Activated naive CD4-positive, alpha-beta T cell treated with anti-CD3 and anti-CD28 coated beads for 36 hours (primary cell): ENCODE measurements at regions of chr6 and their contacts with region 1.

Region 1: DNA sequence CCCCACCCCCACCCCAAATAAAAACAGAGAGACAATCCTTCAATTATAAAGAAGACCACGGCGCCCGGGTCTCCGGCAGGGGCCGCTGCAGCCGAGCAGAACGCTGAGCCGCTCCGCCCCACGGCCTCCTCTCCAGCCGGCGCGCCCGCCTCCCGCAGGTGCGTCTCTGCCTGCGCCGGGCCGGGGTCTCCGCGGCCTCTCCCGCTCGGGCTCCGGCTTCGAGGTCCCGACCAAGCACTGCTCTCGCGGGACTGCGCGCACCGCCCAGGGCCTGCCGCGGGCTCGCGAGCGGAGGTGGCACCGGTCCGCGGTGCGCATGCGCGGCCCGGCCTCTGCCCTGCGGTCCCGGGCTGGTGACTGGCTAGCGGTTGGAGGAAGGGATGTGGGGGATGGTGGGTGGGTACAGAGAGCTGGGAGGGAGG is 241 bp upstream of the SIRT5 start:
- DNase-seq: peak; percentile 91
- H3K4me3 Mint-ChIP-seq: peak overlapping the region; percentile 92
- H3K27ac Mint-ChIP-seq: peak overlapping the region; percentile 97
- H3K4me1 Mint-ChIP-seq: peaks cover 19% of the 10 kb centered on the region
- H3K27me3 Mint-ChIP-seq: no peaks in the 10 kb centered on the region

Region 2: GRCh38 chr6:13336553-13336952 is 237.6 kb before region 1 on chr6:
- CTCF ChIA-PET with region 1: interaction called, 32 read pairs
- intact Hi-C with region 1: loop called (anchors 1 kb)
- DNase-seq: peak; percentile 82
- H3K4me3 Mint-ChIP-seq: no peak overlapping the region
- H3K27ac Mint-ChIP-seq: no peak overlapping the region
- H3K4me1 Mint-ChIP-seq: peaks cover 8% of the 10 kb centered on the region
- H3K27me3 Mint-ChIP-seq: no peaks in the 10 kb centered on the region

Region 3: GRCh38 chr6:13427801-13428582 is 146.2 kb before region 1 on chr6:
- CTCF ChIA-PET with region 1: interaction called, 5 read pairs
- intact Hi-C with region 1: loop called (anchors 1 kb)
- DNase-seq: peak; percentile 90
- H3K4me3 Mint-ChIP-seq: peak overlapping the region; percentile 53
- H3K27ac Mint-ChIP-seq: peak overlapping the region; percentile 85
- H3K4me1 Mint-ChIP-seq: peaks cover 68% of the 10 kb centered on the region
- H3K27me3 Mint-ChIP-seq: no peaks in the 10 kb centered on the region

Region 4: GRCh38 chr6:13504611-13505344 is 69.4 kb before region 1 on chr6:
- CTCF ChIA-PET with region 1: no interaction called
- intact Hi-C with region 1: no loop called
- DNase-seq: no peak
- H3K4me3 Mint-ChIP-seq: no peak overlapping the region
- H3K27ac Mint-ChIP-seq: no peak overlapping the region
- H3K4me1 Mint-ChIP-seq: peaks cover 7% of the 10 kb centered on the region
- H3K27me3 Mint-ChIP-seq: no peaks in the 10 kb centered on the region

Region 5: DNA sequence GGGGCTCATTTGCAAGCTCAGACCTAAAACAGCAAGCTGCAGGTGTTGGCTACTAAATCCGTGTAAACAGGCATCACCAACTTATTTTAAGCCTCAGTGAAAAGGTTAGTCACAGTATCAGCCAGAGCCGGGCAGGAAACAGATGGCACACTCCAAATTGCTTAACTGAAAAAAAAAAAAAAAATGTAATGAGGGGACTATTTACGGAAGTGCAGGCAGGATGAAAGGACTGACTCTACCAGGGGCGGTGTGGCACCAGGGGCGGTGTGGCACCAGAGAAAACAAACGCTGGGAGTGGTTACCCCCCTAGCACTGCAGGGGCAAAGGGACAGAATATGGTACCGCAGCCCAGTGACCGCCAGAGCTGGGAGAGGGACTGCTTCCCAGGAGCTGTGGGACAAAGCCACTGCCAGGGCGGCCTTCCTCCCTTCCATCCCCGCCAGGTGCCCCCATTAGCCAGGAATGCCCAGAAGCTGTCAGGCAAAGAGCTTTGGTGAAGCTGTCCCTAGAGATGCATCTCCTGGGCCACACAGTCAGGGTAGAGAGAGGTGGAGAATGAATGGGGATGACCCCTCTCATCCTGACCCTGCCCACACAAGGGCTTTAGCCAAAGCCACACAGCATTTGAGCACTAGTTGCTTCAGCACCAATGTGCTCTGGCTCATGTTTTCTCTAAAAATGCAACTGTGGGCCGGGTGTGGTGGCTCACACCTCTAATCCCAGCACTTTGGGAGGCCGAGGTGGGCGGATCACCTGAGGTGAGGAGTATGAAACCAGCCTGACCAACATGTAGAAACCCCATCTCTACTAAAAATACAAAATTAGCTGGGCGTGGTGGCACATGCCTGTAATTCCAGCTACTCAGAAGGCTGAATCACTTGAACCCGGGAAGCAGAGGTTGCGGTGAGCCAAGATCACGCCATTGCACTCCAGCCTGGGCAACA is 47.2 kb before region 1 on chr6:
- CTCF ChIA-PET with region 1: interaction called, 3 read pairs
- intact Hi-C with region 1: loop called (anchors 1 kb)
- DNase-seq: peak; percentile 60
- H3K4me3 Mint-ChIP-seq: no peak overlapping the region
- H3K27ac Mint-ChIP-seq: no peak overlapping the region
- H3K4me1 Mint-ChIP-seq: peaks cover 11% of the 10 kb centered on the region
- H3K27me3 Mint-ChIP-seq: no peaks in the 10 kb centered on the region

Region 6: DNA sequence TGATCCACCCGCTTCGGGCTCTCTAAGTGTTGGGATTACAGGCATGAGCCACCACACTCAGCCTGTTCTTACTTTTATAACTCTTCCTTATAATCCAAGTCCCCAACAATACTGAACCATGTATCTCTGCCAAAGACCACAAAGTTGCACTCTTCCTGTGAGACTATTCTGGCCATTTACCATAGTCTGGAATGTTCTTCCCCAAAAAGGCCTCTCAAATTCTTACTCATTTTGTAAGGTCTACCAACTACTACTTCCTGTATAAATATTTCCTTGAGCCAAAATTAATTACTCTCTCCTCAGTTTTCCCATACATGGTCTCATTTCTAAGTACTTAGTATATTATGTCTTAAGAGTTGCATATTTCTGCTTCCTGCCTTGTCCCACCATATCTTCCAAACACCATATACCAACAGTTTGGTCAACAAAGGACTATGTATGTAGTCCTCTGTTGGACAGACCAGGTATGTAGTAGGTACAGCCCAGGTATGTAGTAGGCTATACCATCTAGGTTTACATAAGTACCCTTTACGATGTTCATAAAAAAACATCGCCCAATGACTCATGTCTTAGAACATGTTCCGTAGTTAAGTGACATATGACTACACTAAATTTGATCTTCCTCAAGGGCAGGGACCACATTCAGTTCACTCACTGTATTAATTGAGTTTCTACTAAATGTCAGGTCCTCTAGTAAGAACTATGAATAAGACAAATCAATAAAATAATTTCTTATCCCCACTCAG is 115.5 kb after region 1 on chr6:
- CTCF ChIA-PET with region 1: no interaction called
- intact Hi-C with region 1: no loop called
- DNase-seq: no peak
- H3K4me3 Mint-ChIP-seq: no peak overlapping the region
- H3K27ac Mint-ChIP-seq: peak overlapping the region; percentile 44
- H3K4me1 Mint-ChIP-seq: peaks cover 72% of the 10 kb centered on the region
- H3K27me3 Mint-ChIP-seq: no peaks in the 10 kb centered on the region

Region 7: DNA sequence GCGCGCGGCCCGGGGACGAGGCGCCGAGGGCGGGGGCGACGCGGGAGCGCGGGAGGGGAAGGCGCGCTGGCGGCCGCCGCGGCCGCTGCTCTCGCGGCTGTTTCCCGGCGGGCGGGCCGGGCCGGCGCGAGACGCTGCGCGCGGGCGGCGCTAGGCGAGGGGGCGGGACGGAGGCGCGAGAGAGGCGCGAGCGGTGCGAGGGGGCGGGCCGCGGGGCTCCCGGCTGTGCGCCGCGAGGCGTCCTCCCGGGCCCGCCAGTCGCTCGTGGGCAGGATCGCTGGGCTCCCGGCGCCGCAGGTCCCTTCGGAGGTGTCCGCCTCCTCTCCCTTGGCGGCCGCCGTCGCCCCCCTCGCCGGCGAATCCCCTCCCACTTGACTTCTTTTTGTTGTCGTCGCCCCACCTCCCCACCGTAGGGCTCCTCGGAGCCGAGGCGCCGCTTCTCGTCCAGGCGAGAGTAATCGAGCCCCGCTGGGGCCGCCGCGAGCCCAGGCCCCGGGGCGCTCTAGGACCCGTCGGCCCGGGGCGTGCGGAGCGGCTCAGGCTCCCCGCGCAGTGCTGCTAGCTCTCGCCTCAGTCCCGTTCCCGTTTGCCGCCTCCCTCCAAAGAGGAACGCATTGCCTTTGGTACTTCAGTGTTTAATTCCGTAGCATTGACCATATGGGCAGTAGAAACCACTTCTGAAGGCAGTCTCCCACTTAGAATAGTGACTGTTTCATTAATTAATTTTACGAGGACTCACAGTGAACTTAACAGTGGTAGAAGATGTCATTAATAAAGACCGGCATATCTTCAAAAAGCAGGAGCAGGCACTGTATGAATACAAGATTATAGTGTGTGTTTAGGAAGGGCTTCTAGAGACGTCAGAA is 137.8 kb after region 1 on chr6 and contains the start of gene RANBP9:
- CTCF ChIA-PET with region 1: interaction called, 6 read pairs
- intact Hi-C with region 1: loop called (anchors 1 kb)
- DNase-seq: peak; percentile 86
- H3K4me3 Mint-ChIP-seq: peak within 1 kb of the TSS; percentile 87
- H3K27ac Mint-ChIP-seq: peak within 1 kb of the TSS; percentile 96
- H3K4me1 Mint-ChIP-seq: peaks cover 54% of the 10 kb centered on the region
- H3K27me3 Mint-ChIP-seq: no peaks in the 10 kb centered on the region
- total RNA-seq, gene RANBP9: 61.2 to 62.9 TPM

Region 8: DNA sequence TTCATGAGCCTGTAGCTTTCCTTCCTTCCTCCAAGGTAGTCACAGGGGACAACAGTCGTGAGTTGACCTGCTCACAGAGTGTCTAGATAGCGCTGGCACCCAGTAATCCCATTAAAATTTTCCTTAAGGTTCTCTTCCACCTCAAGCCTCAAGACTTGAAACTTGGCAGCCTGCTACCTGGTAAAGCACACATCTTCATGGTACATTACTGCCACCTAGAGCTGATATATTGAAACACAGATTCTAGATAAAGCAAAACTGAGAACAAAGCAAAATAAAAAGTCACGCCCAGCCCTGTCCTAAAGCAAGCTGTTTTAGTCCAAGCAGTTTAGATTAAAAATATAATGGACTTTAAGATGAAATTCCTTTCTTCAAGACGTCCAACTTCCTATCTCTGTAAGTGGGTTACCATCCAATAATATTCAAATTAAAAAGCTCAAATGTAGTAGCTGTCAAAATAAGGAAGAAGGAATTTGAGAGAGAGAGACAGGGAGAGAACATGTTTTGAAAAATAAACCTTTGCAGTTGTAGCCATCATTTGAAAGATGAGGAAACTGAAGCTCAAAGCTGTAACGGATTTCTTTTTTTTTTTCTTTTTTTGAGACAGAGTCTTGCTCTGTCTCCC is 492.7 kb after region 1 on chr6:
- CTCF ChIA-PET with region 1: interaction called, 4 read pairs
- intact Hi-C with region 1: loop called (anchors 10 kb)
- DNase-seq: peak; percentile 31
- H3K4me3 Mint-ChIP-seq: no peak overlapping the region
- H3K27ac Mint-ChIP-seq: no peak overlapping the region
- H3K4me1 Mint-ChIP-seq: peaks cover 2% of the 10 kb centered on the region
- H3K27me3 Mint-ChIP-seq: peaks cover 5% of the 10 kb centered on the region